ENCODE measurements at regions of chr4 and their contacts with region 1.

Region 1: DNA sequence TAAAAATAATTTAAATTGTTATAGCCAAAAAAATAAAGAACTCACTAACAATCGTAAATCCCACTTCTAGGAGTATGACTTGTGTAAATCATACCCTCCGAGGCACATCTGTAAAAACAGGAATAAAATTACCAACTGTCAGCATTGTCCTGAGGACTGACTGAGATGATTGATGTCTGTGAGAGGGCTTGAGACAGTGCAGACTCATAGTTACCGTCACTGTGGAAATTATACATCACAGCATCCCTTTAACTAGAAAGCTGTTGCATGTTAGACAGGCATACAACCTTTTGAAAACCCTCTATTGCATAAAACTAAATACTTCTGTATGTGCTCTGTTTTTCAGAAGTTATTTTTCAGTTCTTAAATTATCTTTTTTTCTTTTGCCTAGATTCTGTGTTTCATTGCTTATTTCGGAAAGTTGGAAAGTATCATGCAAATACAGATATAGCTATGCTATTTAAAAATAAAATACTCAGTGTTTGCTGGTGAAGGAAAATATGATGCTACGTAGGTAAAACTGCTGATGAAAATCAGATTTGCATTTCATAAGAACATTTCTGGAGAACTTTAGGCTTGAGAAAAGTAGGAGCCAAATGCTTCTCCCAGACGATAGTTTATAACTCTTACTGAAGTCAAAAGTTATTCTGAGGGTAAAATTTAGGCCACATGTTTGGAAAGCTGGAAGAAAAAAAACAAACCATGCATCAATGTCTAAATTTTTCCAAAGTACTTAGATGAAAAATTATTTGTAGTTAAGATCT is 13.6 kb upstream of the RBPJ start:
- DNase-seq: no peak
- H3K4me3 Mint-ChIP-seq: peak overlapping the region; percentile 51
- H3K27ac Mint-ChIP-seq: peak overlapping the region; percentile 91
- H3K4me1 Mint-ChIP-seq: peaks cover 26% of the 10 kb centered on the region
- H3K27me3 Mint-ChIP-seq: no peaks in the 10 kb centered on the region

Region 2: DNA sequence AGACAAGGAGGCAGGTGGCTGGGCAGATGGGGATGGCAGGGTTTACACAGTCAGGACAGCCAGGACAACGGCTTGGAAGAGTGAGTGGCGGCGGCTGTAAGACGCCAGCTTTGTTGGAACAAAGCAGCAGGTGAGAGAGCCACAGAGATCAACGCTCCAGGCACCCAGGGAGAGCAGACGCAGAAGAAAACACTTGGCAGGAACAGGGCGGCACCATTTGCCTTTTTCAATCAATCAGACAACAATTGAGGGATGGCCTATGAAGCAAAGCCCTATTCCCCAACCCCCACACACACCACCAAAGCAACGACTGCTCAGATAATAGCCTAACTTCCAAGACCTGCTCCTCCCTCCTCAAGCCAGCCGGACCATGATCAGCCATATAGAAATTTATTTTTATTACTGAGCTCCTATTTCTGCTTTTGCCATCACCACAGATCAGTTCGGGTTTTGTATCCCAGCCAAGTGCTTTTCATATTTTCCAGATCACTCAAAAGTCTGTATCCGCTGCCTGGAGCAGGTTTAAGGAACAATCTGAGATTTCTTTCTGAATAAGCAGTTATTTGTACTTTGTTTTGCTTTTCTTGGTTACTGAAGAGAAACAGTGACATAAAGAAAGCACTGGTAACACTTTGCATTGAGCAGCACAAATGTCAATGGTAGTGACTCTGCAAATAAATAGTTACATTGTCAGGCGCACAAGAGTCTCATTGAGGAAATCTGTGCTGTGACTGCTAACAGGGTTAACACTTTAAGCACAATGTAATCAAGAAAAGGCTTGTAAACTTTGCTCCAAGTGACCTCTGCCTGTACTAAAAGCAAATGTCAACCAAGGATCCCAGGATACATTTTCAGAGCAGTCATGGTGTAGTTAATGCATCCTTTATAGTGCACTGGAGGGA is 68.2 kb before region 1 on chr4:
- intact Hi-C with region 1: no loop called
- DNase-seq: no peak
- H3K4me3 Mint-ChIP-seq: no peak overlapping the region
- H3K27ac Mint-ChIP-seq: peak overlapping the region; percentile 83
- H3K4me1 Mint-ChIP-seq: peaks cover 9% of the 10 kb centered on the region
- H3K27me3 Mint-ChIP-seq: no peaks in the 10 kb centered on the region

Region 3: GRCh38 chr4:26273616-26273980 is 33.6 kb before region 1 on chr4:
- intact Hi-C with region 1: loop called (anchors 5 kb)
- DNase-seq: no peak
- H3K4me3 Mint-ChIP-seq: peak overlapping the region; percentile 5
- H3K27ac Mint-ChIP-seq: peak overlapping the region; percentile 42
- H3K4me1 Mint-ChIP-seq: peaks cover 26% of the 10 kb centered on the region
- H3K27me3 Mint-ChIP-seq: no peaks in the 10 kb centered on the region

Region 4: DNA sequence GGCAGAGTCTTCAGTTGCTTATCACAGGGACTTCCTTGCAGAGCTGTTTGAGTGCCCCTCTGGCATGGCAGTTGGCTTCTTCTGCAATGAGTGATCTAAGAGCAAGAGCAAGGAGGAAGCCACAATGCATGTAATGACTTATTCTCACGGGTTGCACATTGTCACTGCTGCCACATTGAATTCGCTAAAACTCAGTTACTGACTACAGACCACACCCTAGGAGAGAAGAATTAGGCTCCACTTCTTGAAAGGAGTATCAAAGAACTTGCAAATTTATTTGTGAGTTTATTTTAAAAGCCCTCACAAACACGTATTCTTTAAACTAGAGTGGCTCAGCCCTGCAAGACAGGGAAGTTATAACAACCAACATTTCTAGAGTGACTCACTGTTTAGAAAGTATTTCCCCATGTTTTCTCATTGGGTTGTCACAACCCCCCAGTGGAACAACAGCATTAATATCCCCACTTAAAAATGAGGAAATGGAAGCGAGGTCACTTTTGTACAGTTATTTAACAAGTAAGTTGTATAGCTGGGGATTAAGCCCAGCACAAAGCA is 18.8 kb before region 1 on chr4:
- intact Hi-C with region 1: loop called (anchors 1 kb)
- DNase-seq: peak; percentile 69
- H3K4me3 Mint-ChIP-seq: peak overlapping the region; percentile 38
- H3K27ac Mint-ChIP-seq: peak overlapping the region; percentile 70
- H3K4me1 Mint-ChIP-seq: peaks cover 16% of the 10 kb centered on the region
- H3K27me3 Mint-ChIP-seq: no peaks in the 10 kb centered on the region